Activated T-helper 2 cell treated with anti-CD3 and anti-CD28 coated beads, Interferon-gamma antibody, Interleukin-2, Interleukin-4, amounts not matched to agents 10 μg/mL and 5 μg/mL and 100 μg/mL, durations not matched to agents 14 hours and 24 hours and 36 hours (primary cell): ENCODE measurements at regions of chr16 and their contacts with region 1.

Region 1: GRCh38 chr16:27408012-27408601 is 6.1 kb downstream of the IL21R start:
- DNase-seq: no peak
- H3K4me3 Mint-ChIP-seq: peak overlapping the region; percentile 99
- H3K27ac Mint-ChIP-seq: peak overlapping the region; percentile 96
- H3K4me1 Mint-ChIP-seq: peaks cover 57% of the 10 kb centered on the region
- H3K27me3 Mint-ChIP-seq: no peaks in the 10 kb centered on the region

Region 2: GRCh38 chr16:27169511-27170071 is 238.5 kb before region 1 on chr16:
- intact Hi-C with region 1: loop called (anchors 5 kb)
- DNase-seq: peak; percentile 67
- H3K4me3 Mint-ChIP-seq: peak overlapping the region; percentile 39
- H3K27ac Mint-ChIP-seq: peak overlapping the region; percentile 82
- H3K4me1 Mint-ChIP-seq: peaks cover 46% of the 10 kb centered on the region
- H3K27me3 Mint-ChIP-seq: no peaks in the 10 kb centered on the region

Region 3: GRCh38 chr16:27313422-27314160 is 94.5 kb before region 1 on chr16 and contains the start of gene IL4R:
- intact Hi-C with region 1: loop called (anchors 1 kb)
- DNase-seq: peak; percentile 67
- H3K4me3 Mint-ChIP-seq: peak within 1 kb of the TSS; percentile 100
- H3K27ac Mint-ChIP-seq: peak within 1 kb of the TSS; percentile 98
- H3K4me1 Mint-ChIP-seq: peaks cover 43% of the 10 kb centered on the region
- H3K27me3 Mint-ChIP-seq: no peaks in the 10 kb centered on the region
- total RNA-seq, gene IL4R: 434 and 437 TPM in 2 replicates

Region 4: GRCh38 chr16:27374804-27375425 is 33.2 kb before region 1 on chr16:
- intact Hi-C with region 1: loop called (anchors 1 kb)
- DNase-seq: no peak
- H3K4me3 Mint-ChIP-seq: no peak overlapping the region
- H3K27ac Mint-ChIP-seq: no peak overlapping the region
- H3K4me1 Mint-ChIP-seq: peaks cover 30% of the 10 kb centered on the region
- H3K27me3 Mint-ChIP-seq: no peaks in the 10 kb centered on the region

Region 5: DNA sequence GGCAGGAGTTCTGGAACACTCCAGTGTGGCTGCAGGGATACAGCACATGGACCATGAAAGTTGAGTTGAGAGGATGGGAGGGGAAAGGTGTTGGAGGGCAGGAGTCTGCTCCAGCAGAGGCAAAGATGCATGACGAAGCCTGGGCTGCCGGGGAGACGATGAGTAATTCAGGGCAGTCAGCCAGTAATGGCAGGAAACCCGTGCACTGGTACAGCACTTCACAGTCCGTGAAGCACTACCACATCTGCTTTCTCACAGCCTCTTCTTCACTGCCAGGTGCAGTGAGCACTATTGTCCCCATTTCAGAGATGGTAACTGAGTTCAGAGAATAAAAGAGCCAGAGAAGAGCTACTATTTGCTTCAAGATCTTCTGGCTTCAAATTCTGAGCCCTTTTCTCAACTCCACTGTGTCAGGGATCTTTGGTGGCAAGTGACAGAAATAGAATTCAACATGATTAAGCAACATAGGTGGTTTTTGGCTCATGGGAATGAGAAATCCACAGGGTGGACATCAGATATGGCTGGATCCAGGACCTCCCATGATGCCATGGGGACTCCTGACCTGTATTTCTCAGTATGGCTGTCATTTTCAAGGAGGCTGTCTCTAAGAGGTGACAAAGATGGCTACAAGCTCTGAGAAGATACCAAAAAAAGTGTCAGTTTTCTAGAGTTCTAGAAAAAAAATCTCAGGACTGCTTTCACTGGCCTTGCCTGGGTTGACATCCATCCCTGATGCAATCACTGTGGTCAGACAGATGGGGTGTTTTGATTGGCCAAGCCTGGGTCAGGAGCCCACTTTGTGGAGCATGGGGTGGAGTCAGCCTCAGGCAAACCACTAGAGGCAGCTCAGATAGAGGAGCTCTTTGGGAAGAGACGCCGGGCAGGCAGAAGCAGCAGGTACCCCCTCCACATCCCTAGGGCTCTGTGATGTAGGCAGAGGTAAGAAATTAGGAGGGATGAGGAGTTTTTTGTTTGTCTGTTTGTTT is 18.6 kb after region 1 on chr16:
- intact Hi-C with region 1: loop called (anchors 2 kb)
- DNase-seq: peak; percentile 66
- H3K4me3 Mint-ChIP-seq: peak overlapping the region; percentile 37
- H3K27ac Mint-ChIP-seq: peak overlapping the region; percentile 76
- H3K4me1 Mint-ChIP-seq: peaks cover 50% of the 10 kb centered on the region
- H3K27me3 Mint-ChIP-seq: no peaks in the 10 kb centered on the region

Region 6: GRCh38 chr16:27449434-27450195 is 41.5 kb after region 1 on chr16:
- intact Hi-C with region 1: loop called (anchors 5 kb)
- DNase-seq: no peak
- H3K4me3 Mint-ChIP-seq: no peak overlapping the region
- H3K27ac Mint-ChIP-seq: peak overlapping the region; percentile 68
- H3K4me1 Mint-ChIP-seq: peaks cover 42% of the 10 kb centered on the region
- H3K27me3 Mint-ChIP-seq: no peaks in the 10 kb centered on the region